Activated T-helper 2 cell treated with anti-CD3 and anti-CD28 coated beads, Interferon-gamma antibody, Interleukin-2, Interleukin-4, amounts not matched to agents 10 μg/mL and 5 μg/mL and 100 μg/mL, durations not matched to agents 14 hours and 24 hours and 36 hours (primary cell): ENCODE measurements at regions of chr11 and their contacts with region 1.

Region 1: DNA sequence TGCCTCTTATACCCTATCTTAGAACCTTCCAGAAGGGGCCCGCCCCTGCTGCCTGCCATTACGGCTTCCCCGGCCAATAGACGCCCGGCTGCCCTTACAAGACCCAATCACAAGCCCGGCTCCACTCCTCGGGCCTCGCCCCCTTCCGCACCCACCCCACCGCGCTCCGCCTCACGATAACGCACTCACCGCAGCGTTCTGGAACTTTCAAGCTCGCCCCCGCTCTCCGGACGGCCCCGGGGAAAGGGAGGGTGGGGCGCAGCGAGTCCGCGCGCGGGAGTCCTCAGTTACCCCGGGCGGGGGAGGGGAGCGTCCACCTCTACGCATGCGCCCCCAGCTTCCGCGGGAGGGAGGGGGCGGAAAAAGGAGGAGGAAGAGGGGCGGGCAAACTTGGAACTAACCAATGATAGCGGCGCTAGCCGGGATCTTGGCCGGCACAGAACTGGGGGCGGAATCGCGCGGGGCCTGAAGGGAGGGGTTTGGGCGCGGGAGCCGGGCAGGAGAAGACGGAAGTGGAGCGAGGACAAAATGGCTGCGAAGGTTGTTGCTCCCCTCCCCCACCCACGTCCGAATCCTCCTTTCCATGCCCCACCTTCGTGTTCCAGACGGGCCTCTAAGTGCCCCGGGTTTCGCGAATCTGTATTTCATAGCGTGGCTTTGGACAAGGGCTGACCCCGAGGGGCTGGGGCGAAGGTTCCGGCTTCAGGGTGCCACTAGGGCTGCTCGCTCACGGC is 389 bp upstream of the HSPA8 start:
- DNase-seq: peak; percentile 99
- H3K4me3 Mint-ChIP-seq: peak overlapping the region; percentile 100
- H3K27ac Mint-ChIP-seq: peak overlapping the region; percentile 98
- H3K4me1 Mint-ChIP-seq: peaks cover 39% of the 10 kb centered on the region
- H3K27me3 Mint-ChIP-seq: no peaks in the 10 kb centered on the region

Region 2: DNA sequence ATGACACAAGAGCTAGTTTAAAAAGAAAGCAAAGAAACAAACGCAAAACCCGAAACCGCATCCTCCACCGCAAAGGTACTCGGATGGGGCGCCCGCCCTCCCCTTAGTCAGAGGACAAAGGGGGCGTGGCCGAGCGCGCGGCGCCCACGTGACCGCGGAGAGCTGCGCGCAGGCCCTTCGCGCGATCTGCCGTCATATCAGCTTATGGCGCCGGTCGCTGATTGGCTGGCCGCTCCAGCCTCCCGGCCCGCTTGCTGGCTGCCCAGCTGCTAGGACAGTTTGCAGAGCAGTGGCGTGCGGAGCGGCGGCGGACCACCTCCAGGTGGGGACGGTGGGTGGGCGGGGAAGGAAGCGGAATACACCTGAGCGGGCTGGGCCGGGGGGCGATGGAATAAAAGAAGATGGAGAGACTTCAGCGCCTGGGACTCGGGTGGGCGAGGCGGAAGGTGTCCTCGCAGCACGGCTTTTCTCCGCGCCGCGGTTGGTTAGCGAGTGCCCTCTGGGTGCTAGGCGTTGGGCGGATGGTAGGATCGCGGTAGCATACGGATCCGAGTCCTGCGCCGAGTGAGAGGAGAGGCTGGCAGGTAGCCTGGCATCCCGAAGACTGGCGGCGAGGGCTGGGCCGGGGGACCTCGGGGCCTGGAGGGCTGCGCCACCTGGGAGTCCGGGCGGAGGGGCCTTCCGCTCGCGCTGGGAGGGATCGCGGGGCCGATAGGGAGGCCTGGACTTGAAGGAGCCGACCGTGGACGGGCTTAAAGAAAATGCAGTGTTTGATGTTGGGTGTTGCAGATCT is 1769.6 kb before region 1 on chr11 and contains the start of gene SC5D:
- intact Hi-C with region 1: loop called (anchors 10 kb)
- DNase-seq: peak; percentile 92
- H3K4me3 Mint-ChIP-seq: peak within 1 kb of the TSS; percentile 88
- H3K27ac Mint-ChIP-seq: peak within 1 kb of the TSS; percentile 87
- H3K4me1 Mint-ChIP-seq: peaks cover 36% of the 10 kb centered on the region
- H3K27me3 Mint-ChIP-seq: peaks cover 9% of the 10 kb centered on the region
- total RNA-seq, gene SC5D: 23.2 and 28.0 TPM in 2 replicates

Region 3: DNA sequence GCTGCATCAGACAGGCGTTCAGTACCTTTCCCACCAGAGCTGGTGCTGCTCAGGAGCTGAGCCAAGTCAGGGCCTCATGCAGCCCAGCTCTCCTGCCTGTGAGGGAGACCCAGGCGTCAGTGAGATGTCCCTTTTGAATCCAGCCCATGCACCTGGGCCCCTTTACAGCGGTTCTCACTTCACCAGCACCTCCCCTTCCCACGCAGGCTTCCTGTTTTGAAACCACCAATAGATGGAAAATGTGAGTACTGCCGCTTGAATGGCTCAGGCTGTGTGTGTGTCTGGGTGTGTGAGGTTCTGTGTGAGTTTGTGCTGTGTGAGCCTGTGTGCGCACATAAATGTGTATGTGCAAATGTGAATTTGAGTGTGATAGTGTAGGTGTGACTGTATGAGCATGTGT is 318.4 kb before region 1 on chr11:
- intact Hi-C with region 1: loop called (anchors 1 kb)
- DNase-seq: peak; percentile 75
- H3K4me3 Mint-ChIP-seq: no peak overlapping the region
- H3K27ac Mint-ChIP-seq: no peak overlapping the region
- H3K4me1 Mint-ChIP-seq: peaks cover 40% of the 10 kb centered on the region
- H3K27me3 Mint-ChIP-seq: peaks cover 10% of the 10 kb centered on the region

Region 4: GRCh38 chr11:123083623-123084029 is 21.3 kb after region 1 on chr11:
- intact Hi-C with region 1: loop called (anchors 1 kb)
- DNase-seq: peak; percentile 59
- H3K4me3 Mint-ChIP-seq: peak overlapping the region; percentile 66
- H3K27ac Mint-ChIP-seq: peak overlapping the region; percentile 82
- H3K4me1 Mint-ChIP-seq: peaks cover 47% of the 10 kb centered on the region
- H3K27me3 Mint-ChIP-seq: no peaks in the 10 kb centered on the region

Region 5: GRCh38 chr11:123381817-123382554 is 319.7 kb after region 1 on chr11:
- intact Hi-C with region 1: loop called (anchors 10 kb)
- DNase-seq: peak; percentile 47
- H3K4me3 Mint-ChIP-seq: peak overlapping the region; percentile 59
- H3K27ac Mint-ChIP-seq: peak overlapping the region; percentile 50
- H3K4me1 Mint-ChIP-seq: peaks cover 28% of the 10 kb centered on the region
- H3K27me3 Mint-ChIP-seq: no peaks in the 10 kb centered on the region

Region 6: GRCh38 chr11:123454060-123454651 is 391.8 kb after region 1 on chr11:
- intact Hi-C with region 1: loop called (anchors 2 kb)
- DNase-seq: peak; percentile 73
- H3K4me3 Mint-ChIP-seq: peak overlapping the region; percentile 84
- H3K27ac Mint-ChIP-seq: peak overlapping the region; percentile 97
- H3K4me1 Mint-ChIP-seq: peaks cover 88% of the 10 kb centered on the region
- H3K27me3 Mint-ChIP-seq: no peaks in the 10 kb centered on the region